Prostate gland (tissue), 2 donors: ENCODE measurements at regions of chr20 and their contacts with region 1.

Region 1: DNA sequence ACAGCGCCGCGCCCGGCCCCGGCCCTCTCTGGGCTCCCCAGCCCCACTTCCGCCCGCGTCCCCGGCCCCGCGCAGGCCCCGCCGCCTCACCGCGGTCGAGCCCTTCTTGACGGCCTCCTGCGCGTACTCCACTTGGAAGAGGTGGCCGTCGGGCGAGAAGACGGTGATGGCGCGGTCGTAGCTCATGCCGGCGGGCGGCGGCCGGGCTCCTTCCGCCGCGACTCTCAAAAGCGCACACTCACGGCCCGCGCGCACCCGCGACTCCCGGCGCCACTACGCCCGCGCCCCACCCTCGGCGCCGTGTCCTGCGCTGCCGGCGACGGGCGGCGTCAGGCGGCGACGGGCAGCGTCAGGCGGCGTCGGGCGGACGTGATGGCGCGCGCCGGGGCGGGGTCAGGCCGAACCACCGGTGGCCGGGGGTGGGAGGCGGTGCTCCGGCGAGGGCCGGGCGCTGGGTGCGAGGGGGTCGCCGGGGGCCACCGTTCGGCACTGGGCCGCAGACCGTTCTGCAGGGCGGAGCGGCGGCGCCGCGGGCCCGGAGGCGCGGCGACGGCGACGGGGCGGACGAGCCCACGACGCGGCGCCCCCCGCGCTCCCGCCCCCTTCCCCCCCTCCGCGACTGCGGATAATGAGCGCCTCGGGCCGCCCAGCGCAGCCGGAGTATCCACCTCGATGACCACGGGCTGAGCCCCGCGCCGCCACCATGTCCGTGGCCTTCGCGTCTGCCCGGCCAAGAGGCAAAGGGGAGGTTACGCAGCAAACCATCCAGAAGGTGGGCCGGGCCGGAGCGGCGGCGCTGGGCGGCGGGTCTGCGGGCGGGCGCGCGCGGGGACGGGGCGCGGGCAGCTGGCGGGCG is at the starts of genes PSMA7 and SS18L1:
- DNase-seq: peak; percentile 82
- H3K4me3 ChIP-seq: peak within 1 kb of the TSS; percentile 81 to 92
- H3K27ac ChIP-seq: peak within 1 kb of the TSS; percentile 91 to 98
- H3K4me1 ChIP-seq: peaks cover 11% of the 10 kb centered on the region
- H3K27me3 ChIP-seq: no peaks in the 10 kb centered on the region
- CTCF ChIP-seq: peak in 1 of 4 experiments; percentile 11
- POLR2A ChIP-seq: peak; percentile 91
- total RNA-seq, gene PSMA7: 176 to 250 TPM
- total RNA-seq, gene SS18L1: 17.9 to 32.7 TPM

Region 2: DNA sequence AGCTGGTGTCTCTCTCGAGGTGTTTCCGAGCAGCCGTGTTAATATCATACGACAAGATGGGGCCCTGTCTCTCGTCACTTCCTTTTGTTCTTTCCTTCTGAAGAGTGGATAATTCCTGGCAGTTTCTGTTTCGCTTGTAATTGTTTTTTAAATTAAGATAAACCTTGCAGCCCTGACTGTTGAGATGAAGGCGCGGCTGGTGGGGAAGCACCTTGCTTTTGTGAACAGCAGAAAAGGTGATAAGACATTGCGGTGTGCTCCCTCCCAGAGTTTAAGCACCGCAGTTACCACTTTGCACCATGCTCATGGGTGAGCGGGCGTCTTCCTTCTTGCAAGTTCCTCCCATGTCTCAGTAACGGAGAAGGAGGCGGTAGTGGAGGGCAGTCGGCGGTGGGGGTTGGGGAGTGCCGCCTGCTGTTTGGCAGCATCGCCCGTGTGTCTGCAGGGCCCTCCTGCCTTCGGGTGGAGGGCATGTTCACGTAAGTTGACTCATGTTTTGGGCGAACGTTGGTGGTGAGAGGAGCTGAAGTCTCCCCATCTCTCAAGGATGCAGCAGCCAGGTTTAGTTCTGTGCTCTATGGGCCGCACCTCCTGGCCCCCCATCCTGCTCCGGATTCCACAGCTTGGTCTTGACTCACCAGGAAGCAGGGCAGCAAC is 423.5 kb before region 1 on chr20:
- intact Hi-C with region 1: no loop called
- DNase-seq: no peak
- H3K4me3 ChIP-seq: no peak overlapping the region
- H3K27ac ChIP-seq: no peak overlapping the region
- H3K4me1 ChIP-seq: no peaks in the 10 kb centered on the region
- H3K27me3 ChIP-seq: no peaks in the 10 kb centered on the region
- CTCF ChIP-seq: no peak
- POLR2A ChIP-seq: no peak

Region 3: GRCh38 chr20:62121776-62122631 is 21.3 kb before region 1 on chr20 and contains the start of gene LSM14B:
- intact Hi-C with region 1: loop called (anchors 2 kb)
- DNase-seq: peak; percentile 96
- H3K4me3 ChIP-seq: peak within 1 kb of the TSS; percentile 82 to 93
- H3K27ac ChIP-seq: peak within 1 kb of the TSS; percentile 96 to 98
- H3K4me1 ChIP-seq: peaks cover 10% of the 10 kb centered on the region
- H3K27me3 ChIP-seq: no peaks in the 10 kb centered on the region
- CTCF ChIP-seq: peak in 1 of 4 experiments; percentile 10
- POLR2A ChIP-seq: peak; percentile 72
- total RNA-seq, gene LSM14B: 39.7 to 87.1 TPM

Region 4: DNA sequence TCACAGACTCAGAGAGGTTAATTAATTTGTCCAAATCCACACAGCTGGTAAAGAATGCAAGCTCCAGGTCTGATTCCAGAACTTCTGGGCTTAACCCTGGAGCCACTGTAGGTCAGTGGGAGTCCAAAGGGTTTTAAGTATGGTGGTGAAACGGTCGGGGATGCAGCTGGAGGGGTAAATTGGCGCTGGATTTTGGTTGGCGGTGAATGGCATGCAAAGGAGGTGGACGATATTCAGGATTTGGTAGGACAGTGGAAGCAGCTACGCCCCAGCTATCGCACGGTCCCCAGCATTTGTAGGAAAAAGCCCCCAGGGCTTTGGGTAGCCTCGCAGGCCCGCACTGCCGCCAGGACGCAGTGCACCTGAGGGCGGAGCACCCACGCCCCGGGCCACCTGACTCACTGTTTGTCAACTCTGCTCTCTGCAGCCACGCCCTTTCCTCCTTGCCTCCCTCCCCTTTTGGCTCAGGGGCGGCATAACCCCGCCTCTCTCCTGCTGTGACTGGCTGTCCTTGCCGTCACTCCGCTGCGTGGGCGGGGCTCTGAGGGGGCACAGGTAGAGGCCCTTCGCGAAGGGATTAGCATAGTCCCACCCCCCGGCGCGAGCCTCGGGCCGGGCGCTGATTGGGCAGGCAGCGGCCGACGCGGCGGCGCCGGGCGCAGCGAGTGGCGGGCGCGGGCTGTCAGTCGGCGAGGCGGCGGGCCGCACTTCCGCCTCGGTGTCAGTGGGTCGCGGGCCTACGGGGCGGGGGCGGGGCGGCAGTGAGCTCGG is 94.6 kb after region 1 on chr20 and contains the start of gene OSBPL2:
- intact Hi-C with region 1: loop called (anchors 2 kb)
- DNase-seq: peak; percentile 99
- H3K4me3 ChIP-seq: peak within 1 kb of the TSS; percentile 89 to 94
- H3K27ac ChIP-seq: peak within 1 kb of the TSS; percentile 82 to 87
- H3K4me1 ChIP-seq: peaks cover 20% of the 10 kb centered on the region
- H3K27me3 ChIP-seq: no peaks in the 10 kb centered on the region
- CTCF ChIP-seq: peak in 1 of 4 experiments; percentile 11
- POLR2A ChIP-seq: peak; percentile 30
- total RNA-seq, gene OSBPL2: 33.5 to 50.6 TPM

Region 5: GRCh38 chr20:62386383-62387218 is 243.3 kb after region 1 on chr20 and contains the start of gene RPS21:
- intact Hi-C with region 1: loop called (anchors 10 kb)
- DNase-seq: peak; percentile 90
- H3K4me3 ChIP-seq: peak within 1 kb of the TSS; percentile 85 to 92
- H3K27ac ChIP-seq: peak within 1 kb of the TSS; percentile 85 to 86
- H3K4me1 ChIP-seq: peaks cover 10% of the 10 kb centered on the region
- H3K27me3 ChIP-seq: no peaks in the 10 kb centered on the region
- CTCF ChIP-seq: no peak
- POLR2A ChIP-seq: peak; percentile 68
- total RNA-seq, gene RPS21: 1,506 to 4,377 TPM

Region 6: GRCh38 chr20:62791301-62792181 is 648.2 kb after region 1 on chr20:
- intact Hi-C with region 1: no loop called
- DNase-seq: peak; percentile 58
- H3K4me3 ChIP-seq: no peak overlapping the region
- H3K27ac ChIP-seq: no peak overlapping the region
- H3K4me1 ChIP-seq: no peaks in the 10 kb centered on the region
- H3K27me3 ChIP-seq: no peaks in the 10 kb centered on the region
- CTCF ChIP-seq: peak; percentile 71 to 95 (median 88)
- POLR2A ChIP-seq: no peak